Psoas muscle (tissue), 8 donors: ENCODE measurements at regions of chr11 and their contacts with region 1.

Region 1: DNA sequence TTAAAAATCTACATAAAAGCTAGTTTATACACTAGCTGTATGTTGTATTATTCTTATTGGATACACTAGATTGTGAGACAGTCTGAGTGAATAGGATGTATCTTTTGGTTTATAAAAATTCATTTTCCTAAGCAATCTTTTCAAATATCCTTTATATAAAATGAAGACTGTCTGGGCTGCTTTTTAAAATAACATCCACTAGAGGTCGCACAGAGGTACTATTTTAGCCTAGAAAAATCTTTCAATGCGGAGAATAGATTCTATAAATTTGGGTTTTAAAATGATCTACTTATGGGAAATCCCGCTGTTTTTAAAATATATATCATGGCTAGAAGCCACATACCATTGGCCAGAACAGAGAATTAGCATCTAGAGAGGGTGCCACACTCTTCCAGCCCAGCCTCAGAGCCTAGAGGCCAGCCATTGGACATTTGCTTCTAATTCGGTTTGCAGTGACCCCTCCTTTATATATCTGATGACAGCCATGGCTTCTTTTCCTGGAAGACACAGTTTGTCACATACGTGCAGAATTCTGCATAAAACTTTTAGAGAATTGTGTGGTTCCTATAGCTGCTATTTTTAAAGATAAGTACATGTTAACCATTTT is 7.3 kb downstream of the C11orf97 start:
- DNase-seq: no peak
- ATAC-seq: peak in 1 of 4 donors; percentile 76
- H3K4me3 ChIP-seq: no peak overlapping the region
- H3K27ac ChIP-seq: no peak overlapping the region
- H3K4me1 ChIP-seq: no peaks in the 10 kb centered on the region
- H3K27me3 ChIP-seq: no peaks in the 10 kb centered on the region
- CTCF ChIP-seq: peak; percentile 71

Region 2: DNA sequence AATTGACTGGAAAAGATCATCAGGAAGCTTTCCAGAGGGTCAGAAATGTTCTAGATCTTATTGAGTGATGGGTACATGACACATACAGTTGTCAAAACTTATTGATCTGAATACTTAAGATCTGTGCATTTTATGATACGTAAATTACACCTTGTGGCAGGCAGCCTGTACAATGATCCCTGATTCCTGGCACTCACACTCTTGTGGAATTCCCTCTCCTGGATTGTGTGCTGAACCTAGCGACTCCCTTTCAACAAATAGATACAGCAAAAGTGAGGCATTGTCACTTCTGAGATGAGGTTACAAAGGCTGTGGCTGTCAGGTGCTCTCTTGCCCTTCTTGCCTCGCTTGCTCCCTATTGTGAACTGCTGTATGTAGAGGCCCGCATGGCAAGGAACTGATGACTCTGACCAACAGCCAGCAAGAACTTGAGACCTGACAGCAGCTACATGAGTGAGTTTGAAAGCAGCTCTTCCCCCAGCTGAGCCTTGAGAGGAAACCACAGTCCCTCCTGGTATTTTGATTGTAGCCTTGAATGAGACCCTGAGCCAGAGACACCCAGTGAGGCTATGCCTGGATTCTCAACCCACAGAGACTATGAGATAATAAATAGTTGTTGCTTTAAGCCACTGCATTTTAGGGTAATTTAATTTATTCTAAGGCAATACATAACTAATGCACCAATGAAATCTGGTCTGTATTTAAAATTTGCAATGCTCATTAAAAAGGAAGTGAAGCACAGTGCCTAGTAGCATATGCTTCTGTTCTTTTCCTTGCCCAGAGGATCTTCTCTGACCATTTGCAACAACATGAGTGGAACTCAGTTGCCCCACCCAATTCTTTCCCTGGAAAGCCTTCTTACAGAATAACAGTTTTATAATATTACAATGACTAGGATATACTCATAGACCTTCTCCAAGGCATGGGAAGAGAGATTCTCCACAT is 275.7 kb before region 1 on chr11:
- intact Hi-C with region 1: no loop called
- DNase-seq: no peak
- ATAC-seq: no peak
- H3K4me3 ChIP-seq: no peak overlapping the region
- H3K27ac ChIP-seq: no peak overlapping the region
- H3K4me1 ChIP-seq: no peaks in the 10 kb centered on the region
- H3K27me3 ChIP-seq: no peaks in the 10 kb centered on the region
- CTCF ChIP-seq: no peak

Region 3: GRCh38 chr11:94342250-94342649 is 177.3 kb before region 1 on chr11:
- intact Hi-C with region 1: no loop called
- DNase-seq: no peak
- ATAC-seq: no peak
- H3K4me3 ChIP-seq: no peak overlapping the region
- H3K27ac ChIP-seq: no peak overlapping the region
- H3K4me1 ChIP-seq: no peaks in the 10 kb centered on the region
- H3K27me3 ChIP-seq: no peaks in the 10 kb centered on the region
- CTCF ChIP-seq: no peak

Region 4: GRCh38 chr11:94563176-94563847 is 43.7 kb after region 1 on chr11:
- intact Hi-C with region 1: loop called (anchors 2 to 5 kb)
- DNase-seq: no peak
- ATAC-seq: peak; percentile 85 to 99 (median 94)
- H3K4me3 ChIP-seq: no peak overlapping the region
- H3K27ac ChIP-seq: no peak overlapping the region
- H3K4me1 ChIP-seq: no peaks in the 10 kb centered on the region
- H3K27me3 ChIP-seq: no peaks in the 10 kb centered on the region
- CTCF ChIP-seq: peak; percentile 36

Region 5: DNA sequence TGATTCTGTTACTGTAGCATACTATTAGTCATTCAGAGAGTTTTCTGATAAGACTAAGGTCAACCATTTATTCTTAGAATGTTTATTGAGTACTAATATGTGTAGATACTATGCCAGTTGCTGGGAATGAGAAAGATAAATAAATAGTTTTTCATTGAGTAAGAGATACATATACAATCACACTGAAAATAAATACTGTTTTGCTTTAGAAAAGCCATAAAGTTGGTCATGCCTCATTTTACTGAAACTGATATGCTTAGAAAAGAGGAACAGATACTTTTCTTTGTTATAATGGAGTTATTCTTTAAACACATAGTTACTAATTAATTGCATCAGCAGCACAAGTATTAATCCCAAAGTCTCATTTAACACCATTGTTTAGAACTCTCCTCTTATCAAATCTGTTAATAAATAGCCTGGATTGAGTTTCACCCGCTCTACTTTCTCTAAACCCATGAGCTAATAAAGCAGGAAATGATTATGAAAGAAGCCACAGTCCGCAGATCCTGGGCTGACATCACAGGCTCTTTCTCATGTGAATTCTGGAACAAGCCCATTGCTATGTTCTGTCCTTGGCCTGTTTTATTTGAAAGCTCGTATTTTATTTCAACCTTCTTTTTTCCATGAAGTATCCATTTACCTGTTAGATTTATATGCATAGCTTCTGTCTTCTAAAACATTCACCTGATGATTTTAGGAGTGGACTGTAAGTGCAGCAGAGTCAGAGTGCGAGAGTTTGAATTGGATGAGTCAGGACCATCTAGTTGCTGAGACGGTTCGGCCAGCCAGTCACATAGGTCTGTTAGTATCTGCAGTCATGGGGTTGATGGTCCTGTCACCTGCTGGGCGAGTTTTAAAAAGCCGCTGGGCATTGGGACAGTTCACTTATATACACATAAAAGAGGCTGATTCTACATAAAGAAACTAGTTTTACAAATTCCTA is 83.1 kb after region 1 on chr11:
- intact Hi-C with region 1: loop called (anchors 2 to 5 kb)
- DNase-seq: peak; percentile 61 to 68
- ATAC-seq: peak in 3 of 4 donors; percentile 86 to 93 (median 92)
- H3K4me3 ChIP-seq: no peak overlapping the region
- H3K27ac ChIP-seq: no peak overlapping the region
- H3K4me1 ChIP-seq: no peaks in the 10 kb centered on the region
- H3K27me3 ChIP-seq: no peaks in the 10 kb centered on the region
- CTCF ChIP-seq: peak; percentile 59